Activated CD8-positive, alpha-beta T cell treated with anti-CD3 and anti-CD28 coated beads, Interleukin-2, amount 10 ng/mL, durations not matched to agents 7 days and 5 days (primary cell): ENCODE measurements at regions of chr1 and their contacts with region 1.

Region 1: GRCh38 chr1:206106328-206107167 is 10.6 kb downstream of the AVPR1B start:
- DNase-seq: peak; percentile 83
- ATAC-seq: peak; percentile 89
- H3K4me3 Mint-ChIP-seq: no peak overlapping the region
- H3K27ac Mint-ChIP-seq: no peak overlapping the region
- H3K4me1 Mint-ChIP-seq: no peaks in the 10 kb centered on the region
- H3K27me3 Mint-ChIP-seq: peaks cover 9% of the 10 kb centered on the region

Region 2: DNA sequence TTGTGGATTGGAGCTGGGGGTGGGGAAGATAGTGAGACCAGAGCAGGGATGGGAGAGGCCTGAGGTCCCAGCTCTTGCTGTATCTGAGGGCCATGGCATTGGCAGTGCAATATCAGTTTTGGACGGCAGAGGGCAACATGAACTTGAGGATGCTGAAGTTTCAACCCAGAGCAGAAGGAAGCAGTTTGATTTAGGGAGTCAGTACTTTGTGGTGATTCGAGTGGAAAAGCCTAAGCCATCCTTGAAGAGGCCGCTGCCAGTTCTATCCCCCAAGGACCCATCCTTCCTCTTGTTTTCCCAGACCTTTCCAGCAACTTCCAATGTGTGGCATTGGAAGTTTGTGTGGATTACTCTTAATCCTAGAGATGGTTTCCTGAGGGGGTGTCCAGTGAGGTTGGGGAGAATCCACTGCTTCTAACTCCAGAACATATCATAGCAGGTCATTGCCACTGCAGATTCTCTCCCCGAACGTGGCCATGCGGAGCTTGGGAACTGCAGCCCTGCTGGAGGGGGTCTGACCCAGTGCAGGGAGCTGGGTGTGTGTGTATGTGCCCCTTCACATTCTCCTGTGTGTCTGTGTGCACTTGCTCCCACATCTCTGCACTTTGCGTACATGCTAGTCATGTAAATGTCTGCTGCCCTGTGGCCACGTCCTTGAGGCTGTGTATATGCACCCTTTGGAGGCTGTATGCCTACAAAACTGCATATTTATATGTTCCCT is 187.4 kb before region 1 on chr1:
- CTCF ChIA-PET with region 1: interaction called, 25 read pairs
- POLR2A ChIA-PET with region 1: no interaction called
- DNase-seq: peak; percentile 80
- ATAC-seq: peak; percentile 81
- H3K4me3 Mint-ChIP-seq: no peak overlapping the region
- H3K27ac Mint-ChIP-seq: no peak overlapping the region
- H3K4me1 Mint-ChIP-seq: peaks cover 8% of the 10 kb centered on the region
- H3K27me3 Mint-ChIP-seq: peaks cover 4% of the 10 kb centered on the region

Region 3: GRCh38 chr1:205983925-205984725 is 122.4 kb before region 1 on chr1:
- CTCF ChIA-PET with region 1: interaction called, 71 read pairs
- POLR2A ChIA-PET with region 1: no interaction called
- DNase-seq: peak; percentile 46
- ATAC-seq: peak; percentile 63
- H3K4me3 Mint-ChIP-seq: no peak overlapping the region
- H3K27ac Mint-ChIP-seq: no peak overlapping the region
- H3K4me1 Mint-ChIP-seq: no peaks in the 10 kb centered on the region
- H3K27me3 Mint-ChIP-seq: peaks cover 5% of the 10 kb centered on the region

Region 4: GRCh38 chr1:206050655-206051235 is 55.8 kb before region 1 on chr1:
- CTCF ChIA-PET with region 1: interaction called, 11 read pairs
- POLR2A ChIA-PET with region 1: no interaction called
- DNase-seq: peak; percentile 46
- ATAC-seq: peak; percentile 91
- H3K4me3 Mint-ChIP-seq: no peak overlapping the region
- H3K27ac Mint-ChIP-seq: peak overlapping the region; percentile 60
- H3K4me1 Mint-ChIP-seq: peaks cover 32% of the 10 kb centered on the region
- H3K27me3 Mint-ChIP-seq: peaks cover 12% of the 10 kb centered on the region

Region 5: GRCh38 chr1:206080026-206080820 is 26.3 kb before region 1 on chr1:
- CTCF ChIA-PET with region 1: interaction called, 10 read pairs
- POLR2A ChIA-PET with region 1: no interaction called
- DNase-seq: no peak
- ATAC-seq: peak; percentile 63
- H3K4me3 Mint-ChIP-seq: peak overlapping the region; percentile 2
- H3K27ac Mint-ChIP-seq: no peak overlapping the region
- H3K4me1 Mint-ChIP-seq: peaks cover 18% of the 10 kb centered on the region
- H3K27me3 Mint-ChIP-seq: peaks cover 31% of the 10 kb centered on the region

Region 6: DNA sequence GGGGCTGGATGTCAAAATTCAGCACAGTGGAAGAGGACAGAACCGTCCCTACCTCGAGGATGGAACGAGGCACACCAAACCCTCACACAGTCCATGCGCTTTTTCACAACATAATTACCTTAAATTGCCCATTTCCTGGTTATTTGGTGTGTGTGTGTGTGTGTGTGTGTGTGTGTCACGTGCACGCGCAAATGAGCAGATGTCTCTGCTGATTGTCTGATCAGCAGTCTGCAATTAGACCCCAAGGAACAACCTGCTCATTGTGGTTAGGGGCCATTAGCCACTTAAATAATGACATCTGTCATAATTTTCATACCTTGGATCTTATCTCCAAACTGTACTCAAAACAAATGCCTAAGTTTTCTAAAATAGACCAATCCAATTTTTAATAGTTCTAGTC is 12.5 kb before region 1 on chr1:
- CTCF ChIA-PET with region 1: interaction called, 12 read pairs
- POLR2A ChIA-PET with region 1: no interaction called
- DNase-seq: no peak
- ATAC-seq: no peak
- H3K4me3 Mint-ChIP-seq: no peak overlapping the region
- H3K27ac Mint-ChIP-seq: no peak overlapping the region
- H3K4me1 Mint-ChIP-seq: no peaks in the 10 kb centered on the region
- H3K27me3 Mint-ChIP-seq: peaks cover 28% of the 10 kb centered on the region

Region 7: DNA sequence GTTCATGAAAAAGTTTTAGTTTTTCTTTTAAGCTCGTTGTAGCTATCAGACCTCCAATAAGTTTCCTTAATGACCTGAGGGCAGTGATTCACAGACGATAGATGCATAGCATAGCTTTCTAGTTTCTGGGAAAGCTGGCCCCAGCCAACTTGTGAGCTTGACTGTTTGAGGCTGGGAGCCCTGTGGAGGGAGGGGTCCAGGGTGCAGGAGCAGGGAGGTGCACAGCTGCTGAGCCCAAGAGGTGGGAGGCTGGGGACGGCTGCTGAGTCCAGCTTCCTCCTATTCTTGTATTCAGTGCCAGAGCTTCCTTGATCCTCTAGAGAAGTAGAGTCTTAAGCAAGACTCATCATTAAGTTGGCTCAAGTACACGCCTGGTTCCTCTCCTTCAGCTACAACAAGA is 21.6 kb after region 1 on chr1:
- CTCF ChIA-PET with region 1: no interaction called
- POLR2A ChIA-PET with region 1: no interaction called
- DNase-seq: no peak
- ATAC-seq: no peak
- H3K4me3 Mint-ChIP-seq: no peak overlapping the region
- H3K27ac Mint-ChIP-seq: no peak overlapping the region
- H3K4me1 Mint-ChIP-seq: no peaks in the 10 kb centered on the region
- H3K27me3 Mint-ChIP-seq: peaks cover 25% of the 10 kb centered on the region